Activated CD4-positive, alpha-beta T cell treated with anti-CD3 and anti-CD28 coated beads for 36 hours (primary cell): ENCODE measurements at regions of chr3 and their contacts with region 1.

Region 1: GRCh38 chr3:129058441-129059200 is 2.0 kb upstream of the GP9 start:
- DNase-seq: peak; percentile 41
- ATAC-seq: peak; percentile 50
- H3K4me3 Mint-ChIP-seq: no peak overlapping the region
- H3K27ac Mint-ChIP-seq: no peak overlapping the region
- H3K4me1 Mint-ChIP-seq: peaks cover 10% of the 10 kb centered on the region
- H3K27me3 Mint-ChIP-seq: no peaks in the 10 kb centered on the region

Region 2: DNA sequence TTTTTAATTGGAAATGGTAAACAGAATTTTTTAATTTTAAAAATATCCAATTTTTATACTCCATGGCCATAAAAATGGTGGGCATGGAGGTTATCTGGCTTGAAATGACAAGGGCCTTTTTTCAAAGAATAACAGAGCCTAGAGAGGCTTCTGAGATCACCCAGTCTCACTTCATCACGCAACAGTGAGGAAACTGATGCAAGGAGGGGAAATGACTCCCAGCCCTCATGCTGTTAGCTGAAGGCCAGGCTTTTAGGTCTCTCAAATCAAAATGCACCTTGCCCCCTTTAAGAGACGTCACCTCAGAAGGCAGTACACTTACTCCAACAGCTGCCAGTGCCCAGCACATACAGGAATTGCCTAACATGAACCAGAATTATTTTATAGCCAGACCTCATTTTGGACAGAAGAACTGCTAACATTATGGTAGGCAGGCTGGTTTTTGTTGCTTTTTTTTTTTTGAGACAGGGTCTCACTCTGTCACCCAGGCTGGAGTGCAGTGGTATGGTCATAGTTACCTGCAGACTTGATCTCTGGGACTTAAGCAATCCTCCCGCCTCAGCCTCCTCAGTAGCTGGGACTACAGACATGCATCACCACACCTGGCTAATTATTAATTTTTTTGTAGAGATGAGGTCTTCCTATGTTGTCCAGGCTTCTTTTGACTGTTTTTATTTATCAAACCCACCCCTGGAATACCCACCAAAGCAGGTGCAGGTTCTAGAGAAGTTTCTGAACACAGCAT is 53.9 kb after region 1 on chr3:
- CTCF ChIA-PET with region 1: interaction called, 10 read pairs
- POLR2A ChIA-PET with region 1: no interaction called
- intact Hi-C with region 1: no loop called
- DNase-seq: peak; percentile 82
- ATAC-seq: peak; percentile 86
- H3K4me3 Mint-ChIP-seq: peak overlapping the region; percentile 52
- H3K27ac Mint-ChIP-seq: peak overlapping the region; percentile 96
- H3K4me1 Mint-ChIP-seq: peaks cover 82% of the 10 kb centered on the region
- H3K27me3 Mint-ChIP-seq: no peaks in the 10 kb centered on the region